Right ventricle myocardium inferior (tissue), 1 donor: ENCODE measurements at regions of chr2 and their contacts with region 1.

Region 1: DNA sequence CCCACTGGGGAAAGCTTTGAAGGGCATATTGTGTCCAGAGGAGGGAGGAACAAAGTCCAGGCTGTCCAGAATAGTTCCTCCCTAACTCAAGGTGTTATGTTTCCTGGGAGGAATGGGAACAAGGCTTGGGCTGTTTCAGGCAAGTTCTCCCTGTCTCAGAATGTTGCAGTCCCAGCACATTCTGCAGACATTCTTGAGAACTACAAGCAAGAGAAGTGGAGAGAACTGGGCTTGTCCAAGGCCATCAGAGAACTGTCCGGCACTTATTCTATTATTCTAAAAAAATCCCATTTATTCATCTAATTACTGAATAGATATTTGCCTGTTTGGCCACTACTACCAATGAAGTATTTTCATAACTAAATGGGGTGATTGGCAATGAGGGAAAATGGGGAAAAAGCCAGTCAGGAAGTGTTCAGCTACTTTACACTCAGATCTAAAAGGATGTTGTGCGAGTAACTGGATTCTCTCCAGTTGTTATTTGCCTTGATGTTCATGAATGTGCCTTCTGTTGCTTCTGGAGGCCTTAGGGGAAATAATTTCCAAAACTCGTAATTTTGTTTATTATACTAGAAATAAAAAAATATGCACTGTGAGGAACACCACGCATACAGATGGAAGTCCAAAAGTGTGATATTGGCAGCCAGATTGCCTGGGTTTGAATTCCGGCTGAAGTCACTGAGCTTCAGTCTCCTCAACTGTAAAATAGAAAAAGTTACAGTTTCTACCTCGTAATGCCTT is 300.1 kb upstream of the RND3 start:
- DNase-seq: no peak
- ATAC-seq: peak; percentile 46

Region 2: GRCh38 chr2:150624001-150624401 is 163.5 kb before region 1 on chr2:
- intact Hi-C with region 1: loop called (anchors 10 kb)
- DNase-seq: no peak
- ATAC-seq: no peak